Activated CD4-positive, alpha-beta memory T cell treated with anti-CD3 and anti-CD28 coated beads for 36 hours (primary cell): ENCODE measurements at regions of chr17 and their contacts with region 1.

Region 1: GRCh38 chr17:77842528-77843147 is 115.9 kb upstream of the TNRC6C start:
- DNase-seq: peak; percentile 51
- H3K4me3 Mint-ChIP-seq: no peak overlapping the region
- H3K27ac Mint-ChIP-seq: peak overlapping the region; percentile 25
- H3K4me1 Mint-ChIP-seq: peaks cover 50% of the 10 kb centered on the region
- H3K27me3 Mint-ChIP-seq: peaks cover 2% of the 10 kb centered on the region

Region 2: DNA sequence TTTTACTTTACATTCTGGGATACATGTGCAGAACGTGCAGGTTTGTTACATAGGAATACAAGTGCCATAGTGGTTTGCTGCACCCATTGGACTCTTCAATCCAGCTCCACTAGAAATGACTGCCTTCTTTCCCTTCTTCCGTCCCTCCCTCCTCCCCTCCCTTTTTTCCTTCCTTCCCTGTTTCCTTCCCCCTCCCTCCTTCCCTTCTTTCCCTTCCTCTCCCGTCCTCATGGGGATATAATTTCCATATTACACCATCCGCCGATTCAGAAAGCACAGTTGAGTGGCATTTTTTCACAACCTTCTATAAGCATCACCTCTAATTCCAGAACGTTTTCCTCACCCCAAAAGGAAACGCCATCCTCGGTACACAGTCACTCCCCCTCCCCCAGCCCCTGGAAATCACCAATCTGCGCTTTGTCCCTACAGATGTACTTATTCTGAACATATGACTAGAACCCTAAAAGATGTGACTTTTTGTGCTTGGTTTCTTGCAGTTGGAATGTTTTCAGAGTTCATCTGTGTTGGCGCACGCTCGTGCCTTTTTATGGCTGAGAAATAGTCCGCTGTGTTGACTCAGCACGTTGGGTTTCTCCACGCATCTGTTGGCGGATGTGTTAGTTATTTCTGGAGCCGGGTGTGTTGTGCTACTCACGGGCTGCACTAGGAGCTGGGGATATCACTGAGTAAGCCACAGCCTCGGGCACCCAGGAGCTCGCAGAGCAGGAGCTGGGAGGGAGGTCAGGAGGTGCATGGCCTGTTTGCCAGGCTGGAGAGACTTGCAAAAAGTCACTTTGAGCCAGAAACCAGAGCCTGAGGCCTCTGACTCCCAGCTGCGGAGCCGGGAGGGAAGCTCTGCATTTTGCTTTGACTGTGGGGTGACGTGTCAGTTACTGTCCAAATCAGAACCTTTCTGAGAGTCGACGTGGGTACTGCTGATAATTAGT is 365.4 kb before region 1 on chr17:
- CTCF ChIA-PET with region 1: no interaction called
- POLR2A ChIA-PET with region 1: no interaction called
- intact Hi-C with region 1: loop called (anchors 10 kb)
- DNase-seq: peak; percentile 63
- H3K4me3 Mint-ChIP-seq: no peak overlapping the region
- H3K27ac Mint-ChIP-seq: peak overlapping the region; percentile 66
- H3K4me1 Mint-ChIP-seq: peaks cover 75% of the 10 kb centered on the region
- H3K27me3 Mint-ChIP-seq: no peaks in the 10 kb centered on the region

Region 3: GRCh38 chr17:77783991-77784820 is 58.4 kb before region 1 on chr17:
- CTCF ChIA-PET with region 1: interaction called, 4 read pairs
- POLR2A ChIA-PET with region 1: no interaction called
- intact Hi-C with region 1: loop called (anchors 2 kb)
- DNase-seq: peak; percentile 86
- H3K4me3 Mint-ChIP-seq: peak overlapping the region; percentile 44
- H3K27ac Mint-ChIP-seq: peak overlapping the region; percentile 84
- H3K4me1 Mint-ChIP-seq: peaks cover 24% of the 10 kb centered on the region
- H3K27me3 Mint-ChIP-seq: no peaks in the 10 kb centered on the region

Region 4: GRCh38 chr17:77881545-77881944 is 38.9 kb after region 1 on chr17:
- CTCF ChIA-PET with region 1: interaction called, 5 read pairs
- POLR2A ChIA-PET with region 1: interaction called, 6 read pairs
- intact Hi-C with region 1: loop called (anchors 1 kb)
- DNase-seq: peak; percentile 87
- H3K4me3 Mint-ChIP-seq: peak overlapping the region; percentile 54
- H3K27ac Mint-ChIP-seq: peak overlapping the region; percentile 89
- H3K4me1 Mint-ChIP-seq: peaks cover 73% of the 10 kb centered on the region
- H3K27me3 Mint-ChIP-seq: no peaks in the 10 kb centered on the region